ENCODE measurements at regions of chr17 and their contacts with region 1.

Region 1: DNA sequence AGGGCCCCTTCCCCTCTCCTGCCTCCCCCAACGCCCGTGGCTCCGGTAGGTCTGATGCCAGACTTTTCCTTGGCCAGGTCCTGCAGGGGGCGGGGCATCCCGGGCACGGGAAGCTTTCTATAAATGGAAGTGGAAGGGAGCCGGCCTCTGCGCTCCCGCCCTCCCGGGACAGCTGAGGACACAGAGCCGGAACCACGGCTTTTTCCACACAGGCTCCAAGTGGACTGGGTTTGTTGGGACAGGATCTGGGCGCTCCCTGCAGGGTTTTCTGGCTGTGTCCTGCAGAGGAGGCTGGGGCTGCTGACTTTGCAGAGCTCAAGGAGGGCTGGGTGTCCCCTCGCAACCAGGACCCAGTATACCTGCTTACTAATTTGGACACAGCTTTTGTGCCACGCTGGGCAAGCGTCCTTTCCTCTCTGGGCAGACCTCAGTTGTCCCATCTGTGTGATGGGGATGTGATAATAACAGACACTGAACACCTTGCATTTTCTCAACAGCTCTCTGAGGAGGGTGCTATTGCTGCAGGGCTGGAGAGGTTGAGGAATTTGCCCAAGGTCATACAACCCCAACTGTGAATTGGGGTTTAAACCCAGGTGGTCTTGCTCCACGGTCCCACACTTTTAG is 1.8 kb downstream of the TNS4 start:
- DNase-seq: peak; percentile 100
- H3K4me3 Mint-ChIP-seq: peak overlapping the region; percentile 33
- H3K27ac Mint-ChIP-seq: no peak overlapping the region
- H3K4me1 Mint-ChIP-seq: peaks cover 20% of the 10 kb centered on the region
- H3K27me3 Mint-ChIP-seq: peaks cover 82% of the 10 kb centered on the region
- CTCF ChIP-seq: no peak

Region 2: DNA sequence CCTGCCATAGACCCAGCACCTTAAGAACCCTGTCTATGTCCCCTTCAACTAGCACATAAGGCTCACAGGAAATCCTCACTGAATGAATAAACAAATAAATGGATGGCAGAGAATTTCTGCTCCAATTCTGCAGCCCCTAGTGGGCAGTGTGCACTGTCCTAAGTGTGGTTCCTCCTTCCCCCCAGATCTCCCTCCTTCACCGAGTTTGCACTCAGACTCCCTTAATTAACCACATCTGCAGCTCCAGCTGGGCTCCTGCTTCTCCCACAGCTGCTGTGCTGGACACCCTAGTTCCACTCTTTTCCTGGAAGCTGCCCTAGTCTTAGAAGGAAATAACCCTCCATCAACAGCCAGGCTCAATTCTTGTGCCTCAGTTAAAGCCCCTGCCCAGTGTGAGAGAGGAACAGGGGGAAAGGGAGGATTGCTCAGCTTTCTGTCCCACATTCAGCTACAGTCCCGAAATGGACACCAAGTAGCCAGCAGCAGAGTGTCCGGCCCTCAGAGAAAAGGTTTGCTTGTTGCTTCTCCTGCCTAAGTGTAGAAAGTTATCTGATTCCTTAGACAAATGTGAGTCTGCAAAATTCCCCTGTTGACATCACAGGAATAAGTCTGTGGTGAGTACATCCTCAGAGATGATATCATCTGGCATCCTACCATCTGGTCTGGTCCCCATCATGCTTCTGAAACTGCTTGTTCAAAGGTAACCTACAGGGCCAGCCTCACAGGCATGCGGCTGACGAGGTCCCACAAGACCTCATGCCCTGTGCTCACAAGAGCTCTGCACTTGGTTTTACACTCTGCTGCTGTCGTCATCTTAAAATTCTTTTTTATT is 559.9 kb before region 1 on chr17:
- CTCF ChIA-PET with region 1: interaction called, 18 read pairs
- intact Hi-C with region 1: loop called (anchors 1 kb)
- DNase-seq: peak; percentile 76
- H3K4me3 Mint-ChIP-seq: no peak overlapping the region
- H3K27ac Mint-ChIP-seq: no peak overlapping the region
- H3K4me1 Mint-ChIP-seq: peaks cover 12% of the 10 kb centered on the region
- H3K27me3 Mint-ChIP-seq: peaks cover 63% of the 10 kb centered on the region
- CTCF ChIP-seq: no peak

Region 3: GRCh38 chr17:40362696-40363110 is 137.0 kb before region 1 on chr17:
- CTCF ChIA-PET with region 1: no interaction called
- intact Hi-C with region 1: no loop called
- DNase-seq: peak; percentile 100
- H3K4me3 Mint-ChIP-seq: peak overlapping the region; percentile 81
- H3K27ac Mint-ChIP-seq: no peak overlapping the region
- H3K4me1 Mint-ChIP-seq: peaks cover 39% of the 10 kb centered on the region
- H3K27me3 Mint-ChIP-seq: peaks cover 9% of the 10 kb centered on the region
- CTCF ChIP-seq: no peak

Region 4: DNA sequence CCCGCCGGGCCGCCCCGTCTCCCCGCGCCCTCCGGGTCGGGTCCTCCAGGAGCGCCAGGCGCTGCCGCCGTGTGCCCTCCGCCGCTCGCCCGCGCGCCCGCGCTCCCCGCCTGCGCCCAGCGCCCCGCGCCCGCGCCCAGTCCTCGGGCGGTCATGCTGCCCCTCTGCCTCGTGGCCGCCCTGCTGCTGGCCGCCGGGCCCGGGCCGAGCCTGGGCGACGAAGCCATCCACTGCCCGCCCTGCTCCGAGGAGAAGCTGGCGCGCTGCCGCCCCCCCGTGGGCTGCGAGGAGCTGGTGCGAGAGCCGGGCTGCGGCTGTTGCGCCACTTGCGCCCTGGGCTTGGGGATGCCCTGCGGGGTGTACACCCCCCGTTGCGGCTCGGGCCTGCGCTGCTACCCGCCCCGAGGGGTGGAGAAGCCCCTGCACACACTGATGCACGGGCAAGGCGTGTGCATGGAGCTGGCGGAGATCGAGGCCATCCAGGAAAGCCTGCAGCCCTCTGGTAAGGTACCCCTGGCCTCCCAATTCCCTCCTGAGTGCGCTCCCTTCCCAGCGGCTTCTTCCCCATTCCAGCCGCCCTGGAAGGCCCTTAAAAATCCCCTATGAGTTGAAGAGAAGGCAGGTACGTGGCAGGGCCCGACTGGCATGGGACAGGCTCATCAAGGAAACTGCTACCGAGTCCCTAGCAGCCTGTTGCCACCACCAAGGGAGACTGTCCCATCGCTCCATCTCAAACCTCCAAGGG is 55.9 kb before region 1 on chr17:
- CTCF ChIA-PET with region 1: interaction called, 4,142 read pairs
- intact Hi-C with region 1: no loop called
- DNase-seq: peak; percentile 100
- H3K4me3 Mint-ChIP-seq: peak overlapping the region; percentile 1
- H3K27ac Mint-ChIP-seq: no peak overlapping the region
- H3K4me1 Mint-ChIP-seq: peaks cover 35% of the 10 kb centered on the region
- H3K27me3 Mint-ChIP-seq: peaks cover 37% of the 10 kb centered on the region
- CTCF ChIP-seq: no peak

Region 5: DNA sequence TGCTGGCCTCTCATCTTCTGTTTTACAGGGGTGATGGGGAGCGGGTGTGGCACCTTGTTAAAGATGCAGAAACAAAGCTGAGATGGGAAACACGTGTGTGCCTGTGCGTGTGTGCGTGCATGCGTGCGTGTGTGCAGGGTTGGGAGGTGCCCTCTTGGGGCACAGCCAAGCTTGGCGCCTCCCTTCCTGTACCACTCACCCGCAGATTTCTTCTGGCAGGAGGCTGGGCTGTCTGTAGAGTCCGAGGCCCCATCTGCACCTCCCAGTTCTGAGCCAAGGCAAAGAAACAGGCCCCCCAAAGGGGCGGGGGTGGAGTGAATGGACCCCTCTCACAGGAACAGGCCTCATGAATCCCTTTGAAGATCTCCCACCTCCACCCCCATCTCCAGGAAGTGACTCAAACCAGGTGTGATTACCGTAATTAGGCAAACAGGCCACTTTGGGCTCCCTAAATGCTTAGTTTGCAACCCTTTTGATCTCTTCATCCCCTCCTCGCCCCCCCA is 19.1 kb before region 1 on chr17:
- CTCF ChIA-PET with region 1: interaction called, 4,142 read pairs
- intact Hi-C with region 1: no loop called
- DNase-seq: peak; percentile 91
- H3K4me3 Mint-ChIP-seq: no peak overlapping the region
- H3K27ac Mint-ChIP-seq: no peak overlapping the region
- H3K4me1 Mint-ChIP-seq: peaks cover 25% of the 10 kb centered on the region
- H3K27me3 Mint-ChIP-seq: peaks cover 36% of the 10 kb centered on the region
- CTCF ChIP-seq: no peak

Region 6: GRCh38 chr17:40516581-40517285 is 17.1 kb after region 1 on chr17:
- CTCF ChIA-PET with region 1: interaction called, 392 read pairs
- intact Hi-C with region 1: no loop called
- DNase-seq: peak; percentile 94
- H3K4me3 Mint-ChIP-seq: no peak overlapping the region
- H3K27ac Mint-ChIP-seq: peak overlapping the region; percentile 1
- H3K4me1 Mint-ChIP-seq: peaks cover 65% of the 10 kb centered on the region
- H3K27me3 Mint-ChIP-seq: peaks cover 26% of the 10 kb centered on the region
- CTCF ChIP-seq: no peak